Brain microvascular endothelial cell (primary cell): ENCODE measurements at regions of chr9 and their contacts with region 1.

Region 1: GRCh38 chr9:121550569-121551512 is 51.2 kb upstream of the GGTA1 start:
- DNase-seq: peak; percentile 54
- H3K4me3 ChIP-seq: peak overlapping the region; percentile 22
- H3K27ac ChIP-seq: no peak overlapping the region
- H3K27me3 ChIP-seq: no peaks in the 10 kb centered on the region
- CTCF ChIP-seq: peak; percentile 89

Region 2: DNA sequence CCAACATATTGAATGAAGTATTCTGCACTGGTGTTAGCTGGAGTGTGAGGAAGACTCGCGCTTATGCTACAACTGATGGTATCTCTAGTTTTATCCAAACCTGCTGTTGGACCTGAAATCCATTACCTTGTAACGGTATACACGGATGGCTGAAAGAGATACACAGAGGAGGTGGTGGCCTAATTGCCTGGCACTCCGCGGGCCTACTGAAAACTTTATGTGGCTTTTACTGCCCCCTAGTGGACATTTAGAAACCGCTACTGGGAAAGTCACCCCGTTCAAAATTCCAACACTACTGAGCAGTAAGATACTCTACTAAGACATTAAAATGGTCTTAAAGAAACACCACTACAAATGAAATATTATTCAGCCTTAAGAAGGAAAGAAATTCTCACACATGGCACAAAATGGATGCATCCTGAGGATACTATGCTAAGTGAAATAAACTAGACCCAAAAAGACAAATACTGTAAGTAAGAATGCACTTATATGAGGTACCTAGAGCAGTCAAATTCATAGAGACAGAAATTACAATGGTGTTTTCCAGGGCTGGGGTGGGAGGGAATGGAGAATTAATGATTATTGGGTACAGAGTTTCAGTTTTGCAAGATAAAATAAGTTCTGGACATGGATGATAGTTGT is 441.9 kb after region 1 on chr9:
- in situ Hi-C with region 1: loop called (anchors 25 kb)
- DNase-seq: peak; percentile 57
- H3K4me3 ChIP-seq: no peak overlapping the region
- H3K27ac ChIP-seq: no peak overlapping the region
- H3K27me3 ChIP-seq: no peaks in the 10 kb centered on the region
- CTCF ChIP-seq: peak; percentile 75